ENCODE measurements at regions of chr2 and their contacts with region 1.

Region 1: DNA sequence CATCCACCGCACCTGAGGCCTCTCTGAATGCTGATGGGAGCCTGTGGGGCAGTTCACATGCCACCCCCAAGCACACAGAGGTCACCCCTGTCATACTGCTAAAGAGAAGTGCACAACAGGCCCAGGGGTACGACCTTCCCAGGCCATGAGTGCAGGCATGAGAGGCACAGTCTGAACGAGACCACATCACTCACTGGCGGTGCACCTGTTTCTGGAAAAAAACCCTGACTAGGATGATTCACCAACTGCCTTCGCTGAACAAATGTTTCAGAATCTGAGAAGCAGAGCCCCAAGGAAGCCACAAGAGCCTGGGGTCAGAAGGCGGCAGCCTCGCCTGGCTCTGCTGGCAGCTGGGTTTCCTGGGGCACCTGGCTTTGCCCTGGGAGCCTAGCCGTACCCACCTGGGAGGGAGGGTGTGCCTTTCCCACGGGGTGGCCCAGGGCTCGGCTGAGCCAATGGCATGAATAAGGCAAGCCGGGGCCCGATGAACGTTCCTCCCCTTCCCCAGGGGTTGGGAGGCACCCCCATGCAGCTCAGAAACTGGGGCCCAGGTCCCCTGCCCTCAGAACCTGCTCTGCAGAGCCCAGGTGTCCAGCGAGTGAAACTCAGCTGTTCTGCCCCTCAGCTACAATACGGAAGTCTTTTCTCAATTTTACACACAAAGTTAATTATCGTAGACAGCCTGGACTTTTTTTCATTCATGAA is 73.8 kb downstream of the HDAC4 start:
- DNase-seq: peak; percentile 30 to 85 (median 74)
- ATAC-seq: peak; percentile 69
- H3K4me3 ChIP-seq: peak overlapping the region in 1 of 2 experiments; percentile 9
- H3K4me3 Mint-ChIP-seq: peak overlapping the region; percentile 36
- H3K27ac ChIP-seq: peak overlapping the region; percentile 34 to 44
- H3K27ac Mint-ChIP-seq: peak overlapping the region; percentile 91
- H3K4me1 ChIP-seq: peaks cover 84% of the 10 kb centered on the region
- H3K4me1 Mint-ChIP-seq: peaks cover 87% of the 10 kb centered on the region
- H3K27me3 ChIP-seq: no peaks in the 10 kb centered on the region
- H3K27me3 Mint-ChIP-seq: no peaks in the 10 kb centered on the region
- CTCF ChIP-seq: no peak

Region 2: DNA sequence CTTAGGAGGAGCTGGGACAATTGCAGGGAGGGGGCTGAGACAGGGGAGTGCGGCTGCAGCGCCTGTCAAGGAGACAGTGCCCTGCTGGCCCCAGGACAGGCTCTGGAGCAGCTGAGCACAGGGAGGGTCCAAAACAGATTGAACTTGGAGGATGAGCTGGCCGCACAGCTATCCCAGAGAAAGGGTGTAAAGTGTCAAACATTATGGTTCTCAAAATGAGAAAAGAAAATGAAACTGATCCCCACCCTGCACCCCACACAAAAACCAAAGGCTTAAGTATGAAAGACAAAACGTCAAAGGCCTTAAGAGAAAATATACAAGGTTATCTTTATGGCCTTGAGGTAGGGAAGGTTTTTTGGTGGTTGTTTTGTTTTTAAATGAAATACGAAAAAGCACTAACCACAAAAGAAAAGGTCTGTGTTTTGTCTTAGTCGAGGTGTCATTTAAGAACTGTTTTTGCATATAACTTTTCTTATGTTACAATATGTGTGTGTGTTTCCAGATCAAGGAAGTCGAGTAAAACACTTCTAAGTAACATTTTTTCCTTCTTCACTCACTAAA is 38.0 kb before region 1 on chr2:
- CTCF ChIA-PET with region 1: no interaction called
- POLR2A ChIA-PET with region 1: interaction called, 4 read pairs
- intact Hi-C with region 1: loop called in 1 of 2 experiments (anchors 5 kb)
- DNase-seq: peak in 5 of 9 experiments; percentile 39 to 86 (median 57)
- ATAC-seq: peak; percentile 69
- H3K4me3 ChIP-seq: peak overlapping the region; percentile 32 to 42
- H3K4me3 Mint-ChIP-seq: peak overlapping the region; percentile 74
- H3K27ac ChIP-seq: peak overlapping the region; percentile 80 to 87
- H3K27ac Mint-ChIP-seq: peak overlapping the region; percentile 98
- H3K4me1 ChIP-seq: peaks cover 76% of the 10 kb centered on the region
- H3K4me1 Mint-ChIP-seq: peaks cover 72% of the 10 kb centered on the region
- H3K27me3 ChIP-seq: no peaks in the 10 kb centered on the region
- H3K27me3 Mint-ChIP-seq: no peaks in the 10 kb centered on the region
- CTCF ChIP-seq: no peak

Region 3: GRCh38 chr2:239298116-239298804 is 28.7 kb before region 1 on chr2:
- CTCF ChIA-PET with region 1: interaction called, 5 read pairs
- POLR2A ChIA-PET with region 1: interaction called, 9 read pairs
- intact Hi-C with region 1: loop called in 1 of 2 experiments (anchors 1 kb)
- DNase-seq: peak; percentile 52 to 93 (median 76)
- ATAC-seq: peak; percentile 86
- H3K4me3 ChIP-seq: peak overlapping the region; percentile 34 to 53
- H3K4me3 Mint-ChIP-seq: peak overlapping the region; percentile 84
- H3K27ac ChIP-seq: peak overlapping the region; percentile 34 to 68
- H3K27ac Mint-ChIP-seq: peak overlapping the region; percentile 94
- H3K4me1 ChIP-seq: peaks cover 73% of the 10 kb centered on the region
- H3K4me1 Mint-ChIP-seq: peaks cover 71% of the 10 kb centered on the region
- H3K27me3 ChIP-seq: no peaks in the 10 kb centered on the region
- H3K27me3 Mint-ChIP-seq: no peaks in the 10 kb centered on the region
- CTCF ChIP-seq: peak; percentile 50

Region 4: DNA sequence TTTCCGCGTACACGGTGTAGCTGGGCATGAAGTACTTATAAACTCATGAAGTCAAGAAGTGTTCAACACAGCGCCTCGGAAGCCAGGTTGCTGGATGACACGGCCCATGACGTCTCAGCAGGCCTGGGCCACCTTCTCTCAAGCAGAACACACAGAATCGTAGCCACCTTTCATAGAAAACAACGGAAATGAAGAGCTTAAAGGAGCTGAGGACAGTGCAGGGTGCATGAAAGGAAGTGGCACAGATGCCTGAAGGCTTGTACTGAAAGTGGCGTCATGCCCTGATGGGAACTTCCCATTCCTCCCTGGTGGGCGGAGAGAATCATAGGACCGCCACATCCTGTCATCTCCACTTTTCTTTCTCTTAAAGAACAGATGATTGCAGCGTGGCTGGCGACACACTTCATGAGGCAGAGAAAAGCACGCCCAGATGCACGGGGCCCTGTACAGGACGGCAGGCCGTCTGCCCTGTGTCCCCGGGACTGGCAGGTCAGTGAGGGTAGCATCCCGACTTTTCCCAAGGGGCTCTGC is 42.7 kb after region 1 on chr2:
- CTCF ChIA-PET with region 1: interaction called, 4 read pairs
- POLR2A ChIA-PET with region 1: interaction called, 4 read pairs
- intact Hi-C with region 1: loop called (anchors 2 to 5 kb)
- DNase-seq: peak; percentile 34 to 93 (median 67)
- ATAC-seq: peak; percentile 94
- H3K4me3 ChIP-seq: peak overlapping the region; percentile 15 to 24
- H3K4me3 Mint-ChIP-seq: peak overlapping the region; percentile 63
- H3K27ac ChIP-seq: peak overlapping the region; percentile 71 to 84
- H3K27ac Mint-ChIP-seq: no peak overlapping the region
- H3K4me1 ChIP-seq: peaks cover 33% of the 10 kb centered on the region
- H3K4me1 Mint-ChIP-seq: peaks cover 20% of the 10 kb centered on the region
- H3K27me3 ChIP-seq: no peaks in the 10 kb centered on the region
- H3K27me3 Mint-ChIP-seq: no peaks in the 10 kb centered on the region
- CTCF ChIP-seq: no peak

Region 5: DNA sequence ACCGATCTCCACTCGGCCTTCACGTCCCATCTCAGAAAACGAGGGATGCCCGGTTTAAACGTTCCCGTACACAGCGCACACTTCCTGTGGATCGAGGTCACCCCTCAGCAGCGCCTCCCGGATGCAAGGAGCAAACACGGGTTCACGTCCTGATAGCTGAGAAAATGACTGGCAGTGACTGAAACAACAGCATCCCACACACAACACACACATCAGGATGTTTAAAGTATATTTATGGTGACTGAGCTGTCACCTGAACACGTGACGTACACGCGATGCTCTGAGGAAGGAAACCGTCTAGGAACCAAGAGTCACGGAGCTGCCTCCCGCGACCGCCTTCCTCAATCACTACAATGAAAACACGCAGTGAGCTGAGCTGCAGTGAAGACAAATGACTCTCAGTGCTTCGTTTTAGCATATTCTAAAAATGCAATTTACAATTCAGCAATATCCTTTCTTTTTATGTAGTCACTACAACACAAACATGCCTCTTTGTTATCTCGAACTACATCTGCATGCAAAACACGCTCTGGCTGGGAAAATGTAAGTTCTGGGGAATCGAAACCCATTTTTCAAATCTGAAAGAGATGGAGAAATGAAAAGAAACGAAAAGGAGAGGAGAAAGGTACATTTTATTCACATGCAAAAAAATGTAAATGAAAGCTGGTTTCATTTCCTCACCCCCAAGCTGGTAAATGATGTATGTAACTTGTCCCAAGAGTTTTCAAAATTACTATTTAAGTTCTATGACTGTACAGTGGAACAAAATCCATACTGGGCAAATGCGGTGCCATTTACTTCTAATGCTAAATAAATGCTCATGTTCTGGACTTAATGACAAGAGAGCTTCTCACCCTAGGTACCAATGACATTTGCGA is 54.1 kb after region 1 on chr2:
- CTCF ChIA-PET with region 1: no interaction called
- POLR2A ChIA-PET with region 1: interaction called, 3 read pairs
- intact Hi-C with region 1: loop called (anchors 2 to 5 kb)
- DNase-seq: peak; percentile 51 to 87 (median 71)
- ATAC-seq: peak; percentile 90
- H3K4me3 ChIP-seq: peak overlapping the region; percentile 26 to 36
- H3K4me3 Mint-ChIP-seq: peak overlapping the region; percentile 86
- H3K27ac ChIP-seq: peak overlapping the region; percentile 42 to 62
- H3K27ac Mint-ChIP-seq: peak overlapping the region; percentile 96
- H3K4me1 ChIP-seq: peaks cover 17% of the 10 kb centered on the region
- H3K4me1 Mint-ChIP-seq: peaks cover 30% of the 10 kb centered on the region
- H3K27me3 ChIP-seq: no peaks in the 10 kb centered on the region
- H3K27me3 Mint-ChIP-seq: no peaks in the 10 kb centered on the region
- CTCF ChIP-seq: no peak

Region 6: GRCh38 chr2:240149943-240150784 is 823.2 kb after region 1 on chr2:
- CTCF ChIA-PET with region 1: no interaction called
- POLR2A ChIA-PET with region 1: no interaction called
- intact Hi-C with region 1: no loop called
- DNase-seq: peak in 4 of 9 experiments; percentile 20 to 43 (median 32)
- ATAC-seq: peak; percentile 64
- H3K4me3 ChIP-seq: no peak overlapping the region
- H3K4me3 Mint-ChIP-seq: no peak overlapping the region
- H3K27ac ChIP-seq: no peak overlapping the region
- H3K27ac Mint-ChIP-seq: no peak overlapping the region
- H3K4me1 ChIP-seq: no peaks in the 10 kb centered on the region
- H3K4me1 Mint-ChIP-seq: no peaks in the 10 kb centered on the region
- H3K27me3 ChIP-seq: peaks cover 0 to 7% of the 10 kb centered on the region in 2 experiments
- H3K27me3 Mint-ChIP-seq: peaks cover 28% of the 10 kb centered on the region
- CTCF ChIP-seq: peak; percentile 50

Region 7: GRCh38 chr2:241161646-241162281 is 1834.8 kb after region 1 on chr2:
- CTCF ChIA-PET with region 1: no interaction called
- POLR2A ChIA-PET with region 1: no interaction called
- intact Hi-C with region 1: no loop called
- DNase-seq: no peak
- ATAC-seq: no peak
- H3K4me3 ChIP-seq: no peak overlapping the region
- H3K4me3 Mint-ChIP-seq: no peak overlapping the region
- H3K27ac ChIP-seq: no peak overlapping the region
- H3K27ac Mint-ChIP-seq: no peak overlapping the region
- H3K4me1 ChIP-seq: no peaks in the 10 kb centered on the region
- H3K4me1 Mint-ChIP-seq: peaks cover 6% of the 10 kb centered on the region
- H3K27me3 ChIP-seq: no peaks in the 10 kb centered on the region
- H3K27me3 Mint-ChIP-seq: no peaks in the 10 kb centered on the region
- CTCF ChIP-seq: no peak